Gastrocnemius medialis (tissue), 4 donors: ENCODE measurements at regions of chr3 and their contacts with region 1.

Region 1: DNA sequence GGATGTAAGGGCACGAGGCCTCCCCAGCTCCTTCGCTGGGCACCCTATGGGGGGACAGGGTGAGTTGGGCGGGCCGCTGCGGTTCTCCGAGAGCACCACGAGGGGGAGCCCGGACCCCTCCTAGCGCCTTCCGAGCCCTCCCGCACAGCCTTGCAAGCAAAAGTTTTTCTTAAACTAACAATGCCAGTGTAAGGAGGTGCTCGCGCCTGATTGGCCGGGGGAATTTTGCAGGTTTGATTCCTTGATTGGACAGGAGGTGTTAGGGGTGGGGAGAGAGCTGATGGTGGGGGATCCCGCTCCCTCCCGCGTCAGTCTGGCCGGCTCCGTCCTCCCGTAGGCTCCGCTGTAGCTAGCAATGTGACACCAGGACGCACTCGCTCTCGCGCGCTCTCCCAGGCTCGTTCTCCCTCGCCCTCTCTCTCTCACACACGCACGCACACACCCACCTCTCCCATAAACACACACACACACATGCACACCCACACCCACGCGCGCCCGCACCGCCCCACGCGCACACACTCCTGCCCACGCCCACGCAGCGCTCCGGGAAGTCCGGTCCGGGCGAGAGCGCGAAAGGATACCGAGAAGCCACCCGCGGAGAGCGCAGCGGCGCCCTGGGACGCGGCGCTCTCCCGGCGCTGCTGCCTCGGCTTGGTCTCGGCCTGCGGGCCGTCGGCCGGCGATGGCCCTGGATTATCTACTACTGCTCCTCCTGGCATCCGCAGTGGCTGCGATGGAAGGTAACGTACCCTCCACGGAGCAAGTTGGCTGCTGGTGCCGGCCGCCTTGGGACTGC is at the start of gene EPHB1:
- DNase-seq: peak; percentile 84 to 93
- ATAC-seq: peak; percentile 89
- H3K4me3 ChIP-seq: peak within 1 kb of the TSS; percentile 63 to 77 (median 72)
- H3K27ac ChIP-seq: peak within 1 kb of the TSS; percentile 72 to 86 (median 74)
- H3K4me1 ChIP-seq: peaks cover 15 to 32% of the 10 kb centered on the region in 2 donors
- H3K27me3 ChIP-seq: no peaks in the 10 kb centered on the region
- CTCF ChIP-seq: peak; percentile 92 to 97 (median 94)
- POLR2A ChIP-seq: peak; percentile 59 to 86
- total RNA-seq, gene EPHB1: 1.00 to 8.9 (median 4.5) TPM

Region 2: GRCh38 chr3:134618478-134619300 is 176.5 kb before region 1 on chr3:
- in situ Hi-C with region 1: no loop called
- intact Hi-C with region 1: no loop called
- DNase-seq: no peak
- ATAC-seq: no peak
- H3K4me3 ChIP-seq: no peak overlapping the region
- H3K27ac ChIP-seq: no peak overlapping the region
- H3K4me1 ChIP-seq: peaks cover 0 to 6% of the 10 kb centered on the region in 2 donors
- H3K27me3 ChIP-seq: no peaks in the 10 kb centered on the region
- CTCF ChIP-seq: no peak
- POLR2A ChIP-seq: no peak

Region 3: GRCh38 chr3:134711284-134711683 is 83.9 kb before region 1 on chr3:
- in situ Hi-C with region 1: no loop called
- intact Hi-C with region 1: no loop called
- DNase-seq: no peak
- ATAC-seq: no peak
- H3K4me3 ChIP-seq: no peak overlapping the region
- H3K27ac ChIP-seq: no peak overlapping the region
- H3K4me1 ChIP-seq: peaks cover 22 to 25% of the 10 kb centered on the region in 2 donors
- H3K27me3 ChIP-seq: no peaks in the 10 kb centered on the region
- CTCF ChIP-seq: no peak
- POLR2A ChIP-seq: no peak

Region 4: DNA sequence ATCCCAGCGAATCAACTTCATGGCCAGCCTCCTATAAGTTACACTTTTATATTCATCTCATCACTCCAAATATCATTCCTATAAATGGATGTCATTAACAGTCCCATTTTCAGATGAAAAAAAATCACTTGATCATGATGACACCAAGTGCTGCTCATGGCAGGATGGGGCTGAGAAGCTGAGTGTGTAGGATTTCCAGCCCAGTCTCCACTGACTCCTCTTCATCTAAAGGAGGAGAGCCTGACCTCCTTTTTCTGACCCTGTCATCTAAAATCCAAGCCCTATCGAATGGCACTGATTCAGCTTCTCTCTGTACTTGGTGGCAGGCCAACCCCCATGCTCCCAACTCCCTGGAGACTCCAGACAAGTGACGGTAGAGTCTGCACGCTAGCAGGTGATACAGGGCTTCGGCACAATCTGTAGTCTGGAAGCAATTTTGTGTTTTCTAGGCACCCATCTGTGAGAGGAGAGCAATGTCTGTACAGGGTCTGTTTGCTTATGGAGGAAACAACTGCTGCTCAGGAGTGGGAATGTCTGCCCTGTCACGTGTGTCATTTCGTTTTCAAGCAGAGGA is 103.1 kb after region 1 on chr3:
- in situ Hi-C with region 1: no loop called
- intact Hi-C with region 1: loop called (anchors 10 kb)
- DNase-seq: peak in 1 of 2 donors; percentile 42
- ATAC-seq: peak; percentile 46 to 73
- H3K4me3 ChIP-seq: no peak overlapping the region
- H3K27ac ChIP-seq: no peak overlapping the region
- H3K4me1 ChIP-seq: no peaks in the 10 kb centered on the region
- H3K27me3 ChIP-seq: no peaks in the 10 kb centered on the region
- CTCF ChIP-seq: no peak
- POLR2A ChIP-seq: no peak

Region 5: GRCh38 chr3:135229018-135229495 is 433.9 kb after region 1 on chr3:
- in situ Hi-C with region 1: no loop called
- intact Hi-C with region 1: loop called (anchors 5 kb)
- DNase-seq: peak; percentile 83 to 93
- ATAC-seq: peak; percentile 93 to 95
- H3K4me3 ChIP-seq: no peak overlapping the region
- H3K27ac ChIP-seq: peak overlapping the region; percentile 77 to 83 (median 78)
- H3K4me1 ChIP-seq: peaks cover 16 to 21% of the 10 kb centered on the region in 2 donors
- H3K27me3 ChIP-seq: no peaks in the 10 kb centered on the region
- CTCF ChIP-seq: peak; percentile 33 to 65 (median 54)
- POLR2A ChIP-seq: peak in 1 of 2 donors; percentile 38

Region 6: DNA sequence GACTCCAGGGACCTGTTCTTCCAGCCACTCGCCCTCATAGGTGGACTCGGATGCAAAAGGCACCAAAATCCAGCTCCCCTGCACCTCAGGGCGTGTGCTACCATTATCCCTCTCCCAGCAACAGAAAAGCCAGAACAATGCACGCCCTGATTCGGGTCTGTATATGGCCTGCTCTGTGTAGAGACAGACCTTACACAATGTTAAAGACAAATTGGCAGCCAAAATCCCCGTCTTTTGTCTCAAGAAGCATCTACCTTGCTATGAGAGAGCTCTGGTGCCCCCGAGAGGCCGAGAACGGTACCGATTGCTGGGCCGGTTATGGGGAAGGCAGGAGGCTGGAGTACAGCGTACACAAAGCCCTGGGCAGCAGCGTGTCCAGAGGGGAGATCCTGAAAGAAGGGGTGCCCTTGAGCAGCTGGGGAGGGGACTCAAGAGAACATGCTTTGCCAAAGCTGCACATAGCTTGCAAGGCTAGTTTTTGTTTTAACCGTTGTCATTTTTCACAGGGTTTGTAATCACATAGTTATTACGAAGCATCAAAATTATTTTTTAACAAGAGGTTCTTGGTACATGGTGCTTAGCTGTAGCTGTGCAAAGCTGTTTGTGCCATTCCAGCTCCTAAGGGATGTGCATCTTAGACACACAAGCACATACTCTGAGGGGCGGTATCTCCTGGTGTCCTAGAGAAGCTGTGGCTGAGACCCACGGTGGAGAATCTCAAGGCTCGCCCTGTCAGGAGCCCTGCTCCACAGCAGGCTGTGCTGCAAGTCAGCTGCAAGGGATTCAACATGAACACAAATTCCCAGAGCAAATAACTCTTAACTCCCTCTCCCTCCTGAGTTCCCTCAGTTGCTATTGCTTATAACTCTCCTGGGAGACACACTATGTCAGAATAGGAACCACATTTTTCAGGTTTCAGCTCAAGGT is 708.9 kb after region 1 on chr3:
- in situ Hi-C with region 1: loop called in 2 of 4 experiments (anchors 25 kb)
- intact Hi-C with region 1: loop called (anchors 2 kb)
- DNase-seq: peak; percentile 18 to 58
- ATAC-seq: peak; percentile 82 to 89
- H3K4me3 ChIP-seq: no peak overlapping the region
- H3K27ac ChIP-seq: no peak overlapping the region
- H3K4me1 ChIP-seq: peaks cover 0 to 5% of the 10 kb centered on the region in 2 donors
- H3K27me3 ChIP-seq: peaks cover 0 to 2% (median 0%) of the 10 kb centered on the region in 3 donors
- CTCF ChIP-seq: peak; percentile 55 to 76 (median 72)
- POLR2A ChIP-seq: no peak

Region 7: DNA sequence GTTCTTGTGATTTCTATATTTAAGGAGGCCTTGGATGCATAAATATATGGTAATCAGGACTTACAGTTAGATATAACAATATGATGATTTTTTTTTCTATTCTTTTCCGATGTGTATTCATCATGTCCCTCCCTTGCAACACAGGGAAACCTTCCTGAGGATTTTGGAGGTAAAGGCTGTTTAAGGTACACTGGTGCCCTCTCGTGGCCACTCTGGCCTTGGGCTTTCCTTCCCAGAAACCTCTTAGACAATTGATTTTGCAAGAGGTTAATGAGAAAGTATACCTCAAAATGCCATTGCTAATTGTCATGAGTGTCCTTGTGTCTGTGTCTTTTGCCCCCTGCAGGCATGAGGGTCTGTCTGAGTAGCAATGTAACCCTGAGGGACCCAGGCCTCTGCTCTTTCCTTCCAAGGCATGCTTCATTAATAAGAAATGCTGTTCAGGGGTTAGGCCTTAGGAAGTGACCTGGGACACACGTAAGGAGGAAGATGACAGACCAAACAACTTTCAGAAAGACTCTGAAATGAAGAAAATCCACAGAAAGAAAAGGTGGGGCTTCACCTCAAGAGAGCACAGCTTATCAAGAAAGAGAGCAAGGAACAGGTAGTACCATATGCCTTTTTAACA is 1100.1 kb after region 1 on chr3:
- in situ Hi-C with region 1: loop called (anchors 10 to 25 kb)
- intact Hi-C with region 1: loop called (anchors 1 kb)
- DNase-seq: peak; percentile 12 to 52
- ATAC-seq: peak; percentile 62 to 81
- H3K4me3 ChIP-seq: no peak overlapping the region
- H3K27ac ChIP-seq: no peak overlapping the region
- H3K4me1 ChIP-seq: no peaks in the 10 kb centered on the region
- H3K27me3 ChIP-seq: no peaks in the 10 kb centered on the region
- CTCF ChIP-seq: peak; percentile 56 to 85 (median 70)
- POLR2A ChIP-seq: no peak